ENCODE measurements at regions of chr3 and their contacts with region 1.

Region 1: DNA sequence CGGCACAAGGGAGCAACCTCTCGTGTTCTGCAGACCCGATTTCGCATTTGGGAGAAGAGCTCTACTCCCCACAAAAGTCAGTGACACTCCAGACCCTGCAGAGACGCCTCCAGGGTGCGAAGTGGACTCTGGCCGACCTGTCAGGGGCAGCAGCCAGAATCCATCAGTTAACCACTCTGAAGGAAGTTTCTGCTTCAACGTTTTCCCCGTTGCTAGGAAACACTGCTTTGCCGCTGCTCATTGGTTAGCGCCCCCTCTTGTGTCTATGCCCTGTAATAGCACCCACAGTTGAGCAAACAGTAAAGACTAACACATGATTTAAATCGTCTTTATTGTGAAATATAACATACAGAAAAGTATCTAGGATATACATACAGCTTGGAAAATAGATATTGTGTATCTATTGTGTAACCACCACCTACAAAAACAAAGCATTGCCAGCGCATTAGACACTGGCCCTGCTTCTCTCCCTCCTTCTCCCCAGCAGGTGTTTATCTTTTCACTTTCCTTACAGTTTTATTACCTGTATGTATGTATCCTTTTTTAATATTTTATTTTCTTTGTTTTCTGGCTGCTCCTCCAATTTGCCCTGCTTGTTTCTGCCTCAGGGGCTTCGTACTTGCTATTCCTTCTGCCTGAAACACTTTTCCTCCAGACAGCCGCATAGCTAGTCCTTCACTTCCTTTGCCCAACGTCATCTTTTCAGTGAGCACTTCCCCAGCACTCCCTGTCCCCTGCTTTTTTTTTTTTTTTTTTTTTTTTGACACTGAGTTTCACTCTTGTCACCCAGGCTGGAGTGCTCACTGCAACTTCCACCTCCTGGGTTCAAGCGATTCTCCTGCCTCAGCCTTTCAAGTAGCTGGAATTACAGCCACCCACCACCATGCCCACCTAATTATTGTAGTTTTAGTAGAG is 38.8 kb downstream of the TMEM40 start:
- DNase-seq: peak; percentile 63
- H3K4me3 ChIP-seq: no peak overlapping the region
- H3K27ac ChIP-seq: no peak overlapping the region
- H3K4me1 ChIP-seq: no peaks in the 10 kb centered on the region
- H3K27me3 ChIP-seq: no peaks in the 10 kb centered on the region
- CTCF ChIP-seq: peak; percentile 61 to 91 (median 86)
- POLR2A ChIP-seq: no peak

Region 2: DNA sequence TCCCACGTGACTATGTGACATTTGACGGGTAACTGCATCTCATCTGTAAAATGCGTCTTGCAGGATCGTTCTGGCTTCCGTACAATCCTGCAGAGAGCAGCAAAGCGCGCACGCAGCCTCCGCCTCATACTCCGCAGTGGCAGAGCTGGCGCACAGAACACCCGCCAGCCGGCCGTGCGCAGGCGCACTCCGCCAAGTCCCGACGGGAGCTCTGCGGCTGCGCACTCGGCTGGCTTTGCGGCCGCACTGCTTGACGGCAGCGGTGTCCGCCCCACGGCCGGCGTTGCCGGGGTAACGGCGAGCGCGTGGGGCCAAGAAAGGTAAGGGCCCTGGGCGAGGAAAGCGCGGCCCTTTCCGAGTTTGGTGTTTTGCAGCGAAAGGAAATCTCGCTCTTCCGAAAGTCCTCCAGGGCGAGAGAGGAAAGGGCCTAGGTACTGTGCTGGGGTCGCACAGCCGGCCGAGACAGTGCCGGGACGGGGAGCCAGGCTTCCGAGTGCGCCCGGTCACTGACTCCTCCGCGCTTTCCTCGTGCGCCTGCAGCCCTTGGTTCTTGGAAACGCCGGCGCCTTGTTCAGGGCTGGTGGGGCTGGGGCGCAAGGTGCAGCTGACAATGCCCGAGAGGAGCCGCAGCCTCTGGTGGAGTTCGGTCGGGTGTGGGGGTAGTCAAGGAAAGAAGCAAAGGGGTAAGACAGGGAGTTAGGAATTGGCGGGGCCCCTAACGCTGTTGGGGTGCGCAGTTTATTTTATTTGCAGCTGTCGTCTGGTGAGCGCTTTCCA is 235.9 kb before region 1 on chr3 and contains the start of gene TSEN2:
- intact Hi-C with region 1: loop called (anchors 2 kb)
- DNase-seq: peak; percentile 90
- H3K4me3 ChIP-seq: peak within 1 kb of the TSS; percentile 55 to 75
- H3K27ac ChIP-seq: peak within 1 kb of the TSS; percentile 49 to 59
- H3K4me1 ChIP-seq: no peaks in the 10 kb centered on the region
- H3K27me3 ChIP-seq: no peaks in the 10 kb centered on the region
- CTCF ChIP-seq: peak in 3 of 4 experiments; percentile 34 to 62 (median 55)
- POLR2A ChIP-seq: peak; percentile 96
- total RNA-seq, gene TSEN2: 13.8 to 14.9 TPM

Region 3: GRCh38 chr3:12601072-12601471 is 119.2 kb before region 1 on chr3:
- intact Hi-C with region 1: loop called (anchors 10 kb)
- DNase-seq: no peak
- H3K4me3 ChIP-seq: no peak overlapping the region
- H3K27ac ChIP-seq: no peak overlapping the region
- H3K4me1 ChIP-seq: no peaks in the 10 kb centered on the region
- H3K27me3 ChIP-seq: no peaks in the 10 kb centered on the region
- CTCF ChIP-seq: no peak
- POLR2A ChIP-seq: no peak

Region 4: GRCh38 chr3:12648384-12648959 is 71.8 kb before region 1 on chr3:
- intact Hi-C with region 1: no loop called
- DNase-seq: no peak
- H3K4me3 ChIP-seq: no peak overlapping the region
- H3K27ac ChIP-seq: no peak overlapping the region
- H3K4me1 ChIP-seq: no peaks in the 10 kb centered on the region
- H3K27me3 ChIP-seq: no peaks in the 10 kb centered on the region
- CTCF ChIP-seq: no peak
- POLR2A ChIP-seq: no peak

Region 5: GRCh38 chr3:12663936-12664908 is 56.0 kb before region 1 on chr3 and contains the start of gene RAF1:
- intact Hi-C with region 1: loop called (anchors 10 kb)
- DNase-seq: peak; percentile 98
- H3K4me3 ChIP-seq: peak within 1 kb of the TSS; percentile 78 to 98
- H3K27ac ChIP-seq: peak within 1 kb of the TSS; percentile 98 to 99
- H3K4me1 ChIP-seq: peaks cover 2% of the 10 kb centered on the region
- H3K27me3 ChIP-seq: no peaks in the 10 kb centered on the region
- CTCF ChIP-seq: peak in 1 of 4 experiments; percentile 45
- POLR2A ChIP-seq: peak; percentile 90
- total RNA-seq, gene RAF1: 101 to 126 TPM